A549 (cell line): ENCODE measurements at regions of chr11 and their contacts with region 1.

Region 1: GRCh38 chr11:17405232-17406005 is 17.0 kb upstream of the KCNJ11 start:
- DNase-seq: peak; percentile 47 to 64
- ATAC-seq: peak; percentile 79 to 86
- H3K4me3 ChIP-seq: no peak overlapping the region; the same call in 2 of the 3 replicates
- H3K27ac ChIP-seq: peak overlapping the region; percentile 71 to 85
- H3K4me1 ChIP-seq: peaks cover 13% of the 10 kb centered on the region
- CTCF ChIP-seq: peak; percentile 26; the same call in 1 of the 3 replicates
- EP300 ChIP-seq: no peak
- POLR2A ChIP-seq: no peak
- RAD21 ChIP-seq: no peak

Region 2: DNA sequence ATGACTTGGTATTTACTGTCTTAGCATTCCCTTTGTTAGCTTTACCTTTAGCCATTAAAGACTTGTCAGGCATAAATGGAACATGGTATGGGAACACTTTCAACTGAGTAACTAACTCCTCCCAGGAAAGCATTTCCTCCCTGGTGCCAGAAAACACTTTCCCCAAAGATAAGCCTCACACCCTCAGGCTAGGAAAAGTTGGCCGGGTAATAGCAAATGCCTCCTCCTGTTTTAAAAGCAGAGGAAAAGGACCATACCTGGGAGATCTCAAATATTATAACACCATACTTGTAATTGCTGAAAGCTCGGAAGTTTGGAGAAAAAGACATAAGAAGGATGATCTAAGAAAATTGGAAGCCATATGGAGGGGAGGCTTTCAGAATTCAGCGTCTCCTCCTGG is 28.9 kb before region 1 on chr11:
- CTCF ChIA-PET with region 1: no interaction called
- POLR2A ChIA-PET with region 1: no interaction called
- DNase-seq: no peak
- ATAC-seq: no peak
- H3K4me3 ChIP-seq: no peak overlapping the region
- H3K27ac ChIP-seq: no peak overlapping the region
- H3K4me1 ChIP-seq: no peaks in the 10 kb centered on the region
- CTCF ChIP-seq: no peak
- EP300 ChIP-seq: no peak
- POLR2A ChIP-seq: no peak
- RAD21 ChIP-seq: no peak

Region 3: DNA sequence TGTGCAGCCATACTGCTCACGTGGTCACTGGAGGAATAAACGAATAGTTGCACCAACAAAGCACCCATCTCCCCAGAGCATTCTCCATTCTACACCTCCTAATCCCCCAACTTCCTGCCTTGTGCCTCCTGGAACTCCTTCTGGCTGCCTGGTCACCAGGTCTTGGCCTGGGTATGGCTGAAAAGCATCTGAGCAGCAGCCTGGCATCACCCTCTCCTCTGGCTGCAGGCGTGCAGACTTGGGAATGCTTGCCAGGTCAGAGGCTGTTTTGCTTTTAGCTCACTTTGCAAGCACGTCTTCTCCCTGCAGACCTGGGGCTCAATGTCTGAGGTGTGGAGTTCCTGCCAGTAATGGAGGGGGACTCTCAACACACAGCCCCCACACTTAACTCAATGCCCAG is 16.4 kb after region 1 on chr11:
- CTCF ChIA-PET with region 1: interaction called, 10 read pairs
- POLR2A ChIA-PET with region 1: interaction called, 7 read pairs
- DNase-seq: no peak
- ATAC-seq: no peak
- H3K4me3 ChIP-seq: no peak overlapping the region
- H3K27ac ChIP-seq: no peak overlapping the region
- H3K4me1 ChIP-seq: peaks cover 8% of the 10 kb centered on the region; the same call in 2 of the 3 replicates
- CTCF ChIP-seq: no peak
- EP300 ChIP-seq: no peak
- POLR2A ChIP-seq: no peak
- RAD21 ChIP-seq: no peak